IMR-90 (cell line): ENCODE measurements at regions of chr11 and their contacts with region 1.

Region 1: GRCh38 chr11:77705195-77705876 is 67.7 kb upstream of the CLNS1A start:
- DNase-seq: peak; percentile 69
- ATAC-seq: peak; percentile 51
- H3K4me3 ChIP-seq: no peak overlapping the region
- H3K27ac ChIP-seq: no peak overlapping the region; the same call in 1 of the 2 replicates
- H3K4me1 ChIP-seq: peaks cover 2% of the 10 kb centered on the region; the same call in 1 of the 2 replicates
- H3K27me3 ChIP-seq: no peaks in the 10 kb centered on the region
- CTCF ChIP-seq: no peak
- POLR2A ChIP-seq: no peak
- RAD21 ChIP-seq: no peak

Region 2: DNA sequence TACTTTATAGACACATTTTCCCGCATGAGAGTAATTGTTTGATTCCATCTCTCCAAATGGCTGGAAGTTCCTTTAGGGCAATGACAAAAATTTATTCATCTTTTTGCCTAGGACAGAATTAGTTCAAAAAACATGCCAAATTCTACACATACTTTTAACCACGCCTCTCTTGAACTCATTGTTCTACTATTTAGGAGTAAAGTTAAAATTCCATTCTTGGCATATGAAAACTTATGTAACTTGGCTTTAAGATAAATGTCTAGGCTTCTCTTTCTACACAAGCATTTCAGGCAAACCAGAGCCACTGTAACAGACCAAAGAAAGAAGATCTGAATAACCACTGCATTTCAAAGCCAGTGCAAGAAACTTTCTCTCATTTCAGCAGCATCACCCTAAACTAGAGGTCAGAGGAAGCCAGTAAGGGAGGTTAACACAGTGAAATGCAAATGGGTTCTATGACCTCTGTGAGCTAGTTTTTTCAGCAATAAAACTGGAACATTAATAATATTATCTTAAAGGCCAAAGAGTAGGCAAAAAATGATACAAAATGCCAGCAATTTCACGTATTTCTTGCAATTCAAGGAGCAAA is 42.1 kb after region 1 on chr11:
- CTCF ChIA-PET with region 1: interaction called, 3 read pairs
- POLR2A ChIA-PET with region 1: no interaction called
- dilution Hi-C with region 1: no loop called
- in situ Hi-C with region 1: no loop called
- intact Hi-C with region 1: loop called (anchors 5 kb)
- DNase-seq: peak; percentile 36
- ATAC-seq: peak; percentile 46
- H3K4me3 ChIP-seq: no peak overlapping the region
- H3K27ac ChIP-seq: no peak overlapping the region
- H3K4me1 ChIP-seq: peaks cover 8% of the 10 kb centered on the region
- H3K27me3 ChIP-seq: no peaks in the 10 kb centered on the region
- CTCF ChIP-seq: no peak
- POLR2A ChIP-seq: no peak
- RAD21 ChIP-seq: no peak

Region 3: GRCh38 chr11:77758331-77758730 is 53.0 kb after region 1 on chr11:
- CTCF ChIA-PET with region 1: no interaction called
- POLR2A ChIA-PET with region 1: no interaction called
- dilution Hi-C with region 1: no loop called
- in situ Hi-C with region 1: no loop called
- intact Hi-C with region 1: no loop called
- DNase-seq: no peak
- ATAC-seq: no peak
- H3K4me3 ChIP-seq: no peak overlapping the region
- H3K27ac ChIP-seq: no peak overlapping the region
- H3K4me1 ChIP-seq: peaks cover 3% of the 10 kb centered on the region; the same call in 1 of the 2 replicates
- H3K27me3 ChIP-seq: no peaks in the 10 kb centered on the region
- CTCF ChIP-seq: no peak
- POLR2A ChIP-seq: no peak
- RAD21 ChIP-seq: no peak